CD8-positive, alpha-beta T cell (primary cell): ENCODE measurements at regions of chr7 and their contacts with region 1.

Region 1: GRCh38 chr7:43582503-43583423 is at the start of gene STK17A:
- DNase-seq: peak; percentile 90 to 98 (median 94)
- ATAC-seq: peak; percentile 76
- H3K4me3 ChIP-seq: peak within 1 kb of the TSS; percentile 87 to 93
- H3K4me3 Mint-ChIP-seq: peak within 1 kb of the TSS; percentile 99
- H3K27ac ChIP-seq: peak within 1 kb of the TSS; percentile 81 to 97
- H3K27ac Mint-ChIP-seq: peak within 1 kb of the TSS; percentile 99
- H3K4me1 ChIP-seq: peaks cover 11% of the 10 kb centered on the region
- H3K4me1 Mint-ChIP-seq: peaks cover 16% of the 10 kb centered on the region
- H3K27me3 ChIP-seq: no peaks in the 10 kb centered on the region
- H3K27me3 Mint-ChIP-seq: no peaks in the 10 kb centered on the region
- CTCF ChIP-seq: peak; percentile 98
- total RNA-seq, gene STK17A: 301 to 311 TPM

Region 2: GRCh38 chr7:42931834-42932651 is 650.7 kb before region 1 on chr7 and contains the starts of genes MRPL32 and PSMA2:
- CTCF ChIA-PET with region 1: interaction called, 15 read pairs
- POLR2A ChIA-PET with region 1: no interaction called
- intact Hi-C with region 1: loop called in 1 of 2 experiments (anchors 2 kb)
- DNase-seq: peak; percentile 89 to 98 (median 93)
- ATAC-seq: peak; percentile 98
- H3K4me3 ChIP-seq: peak within 1 kb of the TSS; percentile 93 to 98
- H3K4me3 Mint-ChIP-seq: peak within 1 kb of the TSS; percentile 100
- H3K27ac ChIP-seq: peak within 1 kb of the TSS; percentile 87 to 91
- H3K27ac Mint-ChIP-seq: peak within 1 kb of the TSS; percentile 98
- H3K4me1 ChIP-seq: peaks cover 45% of the 10 kb centered on the region
- H3K4me1 Mint-ChIP-seq: peaks cover 79% of the 10 kb centered on the region
- H3K27me3 ChIP-seq: no peaks in the 10 kb centered on the region
- H3K27me3 Mint-ChIP-seq: no peaks in the 10 kb centered on the region
- CTCF ChIP-seq: no peak
- total RNA-seq, gene MRPL32: 64.9 to 65.1 TPM
- total RNA-seq, gene PSMA2: 43.6 to 47.9 TPM

Region 3: DNA sequence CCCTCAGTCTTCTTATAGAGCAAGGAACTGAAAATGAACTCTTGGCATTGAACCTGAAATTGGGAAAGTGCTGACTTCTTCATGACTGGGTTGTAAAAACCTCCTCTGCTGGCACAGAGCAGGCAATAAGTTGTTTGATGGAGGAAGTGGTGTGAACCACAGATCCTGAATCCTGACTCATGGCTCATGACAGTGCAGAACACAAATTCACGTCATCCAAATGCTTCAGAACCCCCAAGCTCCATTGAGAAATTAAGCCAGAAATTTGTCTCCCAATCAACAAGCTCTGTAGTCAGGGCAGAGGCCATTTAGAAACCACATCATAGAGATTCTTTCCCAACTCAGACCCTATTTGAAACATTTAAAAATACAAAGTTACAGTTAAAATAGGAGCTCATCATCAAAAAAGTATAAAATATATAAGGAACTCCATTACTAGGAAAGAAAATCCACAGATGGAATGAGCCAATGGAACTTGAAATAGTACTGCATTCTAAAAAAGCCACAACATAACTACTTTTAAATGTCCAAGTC is 10.2 kb before region 1 on chr7:
- CTCF ChIA-PET with region 1: interaction called, 34 read pairs
- POLR2A ChIA-PET with region 1: interaction called, 8 read pairs
- intact Hi-C with region 1: no loop called
- DNase-seq: peak in 2 of 9 experiments; percentile 22 to 53
- ATAC-seq: peak; percentile 76
- H3K4me3 ChIP-seq: no peak overlapping the region
- H3K4me3 Mint-ChIP-seq: no peak overlapping the region
- H3K27ac ChIP-seq: no peak overlapping the region
- H3K27ac Mint-ChIP-seq: no peak overlapping the region
- H3K4me1 ChIP-seq: no peaks in the 10 kb centered on the region
- H3K4me1 Mint-ChIP-seq: peaks cover 4% of the 10 kb centered on the region
- H3K27me3 ChIP-seq: no peaks in the 10 kb centered on the region
- H3K27me3 Mint-ChIP-seq: peaks cover 2% of the 10 kb centered on the region
- CTCF ChIP-seq: no peak

Region 4: DNA sequence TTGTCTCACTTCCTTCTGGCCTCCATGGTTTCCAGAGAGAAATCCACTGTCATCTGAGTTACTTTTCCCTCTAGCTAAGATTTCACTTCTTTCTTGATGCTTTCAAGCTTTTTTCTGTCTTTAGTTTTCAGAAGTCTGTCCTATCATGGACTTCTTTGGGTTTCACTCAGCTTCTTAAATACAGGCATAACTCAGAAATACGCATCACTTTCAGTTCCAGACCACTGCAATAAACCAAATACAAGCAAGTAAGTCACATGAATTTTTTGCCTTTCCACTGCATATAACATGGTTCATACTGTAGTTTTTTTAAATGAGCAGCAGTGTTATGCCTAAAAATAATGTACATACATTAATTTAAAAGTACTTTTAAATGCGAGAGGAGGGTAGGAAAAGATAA is 48.8 kb after region 1 on chr7:
- CTCF ChIA-PET with region 1: interaction called, 134 read pairs
- POLR2A ChIA-PET with region 1: interaction called, 11 read pairs
- intact Hi-C with region 1: no loop called
- DNase-seq: peak in 1 of 9 experiments; percentile 57
- ATAC-seq: peak; percentile 47
- H3K4me3 ChIP-seq: no peak overlapping the region
- H3K4me3 Mint-ChIP-seq: peak overlapping the region; percentile 59
- H3K27ac ChIP-seq: peak overlapping the region; percentile 6 to 67
- H3K27ac Mint-ChIP-seq: peak overlapping the region; percentile 94
- H3K4me1 ChIP-seq: peaks cover 93% of the 10 kb centered on the region
- H3K4me1 Mint-ChIP-seq: peaks cover 94% of the 10 kb centered on the region
- H3K27me3 ChIP-seq: no peaks in the 10 kb centered on the region
- H3K27me3 Mint-ChIP-seq: no peaks in the 10 kb centered on the region
- CTCF ChIP-seq: no peak

Region 5: DNA sequence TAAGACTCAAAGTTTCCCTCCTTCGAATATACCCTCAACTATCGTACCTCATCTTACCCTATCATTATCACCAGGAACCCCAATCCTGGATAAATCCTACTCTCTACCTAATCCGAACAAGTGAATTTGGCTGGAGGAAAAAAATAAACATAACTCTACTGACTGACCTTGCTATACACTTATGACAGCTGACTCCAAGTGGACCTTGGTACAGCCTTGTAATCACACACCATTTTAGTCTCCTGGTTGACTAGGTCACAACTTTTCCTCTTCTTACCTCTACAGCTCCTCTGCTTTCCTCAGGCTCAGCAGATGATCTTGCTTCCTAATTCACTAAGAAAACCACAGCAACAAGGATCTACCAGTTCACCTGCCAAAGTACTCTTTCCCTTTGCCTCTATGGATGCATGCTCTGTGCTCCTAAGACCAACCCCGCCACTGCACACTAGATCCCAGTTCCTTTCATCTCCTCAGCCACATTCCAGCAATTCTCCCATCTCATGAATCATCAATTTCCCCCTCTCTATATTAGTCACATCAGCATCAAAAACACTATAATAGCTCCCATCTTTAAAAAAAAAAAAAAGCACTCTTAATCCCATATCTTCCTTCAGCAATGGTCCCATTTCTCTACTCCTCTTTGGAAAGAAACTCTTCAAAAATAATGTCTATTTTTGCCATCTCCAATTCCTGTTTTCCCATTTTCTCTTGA is 111.1 kb after region 1 on chr7:
- CTCF ChIA-PET with region 1: interaction called, 433 read pairs
- POLR2A ChIA-PET with region 1: interaction called, 133 read pairs
- intact Hi-C with region 1: no loop called
- DNase-seq: no peak
- ATAC-seq: no peak
- H3K4me3 ChIP-seq: no peak overlapping the region
- H3K4me3 Mint-ChIP-seq: no peak overlapping the region
- H3K27ac ChIP-seq: no peak overlapping the region
- H3K27ac Mint-ChIP-seq: no peak overlapping the region
- H3K4me1 ChIP-seq: peaks cover 67% of the 10 kb centered on the region
- H3K4me1 Mint-ChIP-seq: peaks cover 52% of the 10 kb centered on the region
- H3K27me3 ChIP-seq: no peaks in the 10 kb centered on the region
- H3K27me3 Mint-ChIP-seq: no peaks in the 10 kb centered on the region
- CTCF ChIP-seq: no peak

Region 6: GRCh38 chr7:43729214-43729923 is 146.6 kb after region 1 on chr7 and contains the start of gene COA1:
- CTCF ChIA-PET with region 1: interaction called, 29 read pairs
- POLR2A ChIA-PET with region 1: interaction called, 5 read pairs
- intact Hi-C with region 1: loop called (anchors 2 kb)
- DNase-seq: peak; percentile 61 to 93 (median 81)
- ATAC-seq: peak; percentile 92
- H3K4me3 ChIP-seq: peak within 1 kb of the TSS; percentile 81 to 89
- H3K4me3 Mint-ChIP-seq: peak within 1 kb of the TSS; percentile 93
- H3K27ac ChIP-seq: peak within 1 kb of the TSS; percentile 70 to 74
- H3K27ac Mint-ChIP-seq: peak within 1 kb of the TSS; percentile 90
- H3K4me1 ChIP-seq: peaks cover 31% of the 10 kb centered on the region
- H3K4me1 Mint-ChIP-seq: peaks cover 42% of the 10 kb centered on the region
- H3K27me3 ChIP-seq: no peaks in the 10 kb centered on the region
- H3K27me3 Mint-ChIP-seq: no peaks in the 10 kb centered on the region
- CTCF ChIP-seq: no peak
- total RNA-seq, gene COA1: 95.8 to 96.7 TPM

Region 7: DNA sequence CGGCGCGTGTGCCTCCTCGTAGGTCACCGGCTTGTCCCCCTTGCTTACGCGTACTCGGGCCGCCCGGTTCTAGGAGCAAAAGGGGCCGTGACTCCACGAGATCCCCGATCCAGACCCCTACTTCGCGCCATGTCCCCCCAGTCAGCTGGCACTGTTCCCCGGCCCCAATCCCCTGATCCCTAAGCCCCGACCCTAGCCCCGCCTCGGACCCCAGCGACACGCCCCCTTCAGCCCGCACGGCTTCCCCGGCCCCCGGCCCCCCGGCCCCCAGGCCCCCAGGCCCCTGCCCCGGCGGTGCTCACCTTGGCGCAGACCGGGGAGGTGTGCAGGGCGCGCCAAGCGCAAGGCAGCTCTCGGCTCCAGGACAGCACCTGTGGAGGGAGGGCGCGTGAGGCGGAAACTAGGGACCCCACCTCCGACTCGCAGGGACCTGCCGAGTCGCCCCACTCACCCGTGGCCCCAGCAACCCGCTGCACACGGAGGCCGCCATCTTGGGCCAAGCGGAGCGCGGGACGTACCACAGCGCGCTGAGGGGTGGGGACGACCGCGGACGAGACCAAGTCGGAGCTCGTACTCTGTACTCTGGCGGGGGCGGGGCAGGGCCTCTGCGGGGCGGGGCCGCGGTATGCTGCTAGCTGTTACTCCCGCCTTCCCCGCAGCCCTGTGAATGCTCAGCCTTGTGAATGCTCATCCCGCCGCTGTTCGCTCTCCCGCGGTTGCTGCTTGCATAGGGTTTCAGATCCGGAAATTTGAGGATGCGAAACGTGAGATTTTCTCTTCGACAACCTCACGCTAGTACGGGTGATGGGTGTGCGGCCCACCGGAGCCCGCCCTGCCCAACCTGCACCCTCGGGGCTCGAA is 286.5 kb after region 1 on chr7 and contains the start of gene MRPS24:
- CTCF ChIA-PET with region 1: no interaction called
- POLR2A ChIA-PET with region 1: interaction called, 4 read pairs
- intact Hi-C with region 1: loop called in 1 of 2 experiments (anchors 1 kb)
- DNase-seq: peak; percentile 91 to 97 (median 95)
- ATAC-seq: peak; percentile 100
- H3K4me3 ChIP-seq: peak within 1 kb of the TSS; percentile 69 to 76
- H3K4me3 Mint-ChIP-seq: peak within 1 kb of the TSS; percentile 94
- H3K27ac ChIP-seq: peak within 1 kb of the TSS; percentile 50 to 69
- H3K27ac Mint-ChIP-seq: peak within 1 kb of the TSS; percentile 93
- H3K4me1 ChIP-seq: peaks cover 14% of the 10 kb centered on the region
- H3K4me1 Mint-ChIP-seq: peaks cover 23% of the 10 kb centered on the region
- H3K27me3 ChIP-seq: no peaks in the 10 kb centered on the region
- H3K27me3 Mint-ChIP-seq: no peaks in the 10 kb centered on the region
- CTCF ChIP-seq: no peak
- total RNA-seq, gene MRPS24: 61.7 to 74.4 TPM